K562 (cell line): ENCODE measurements at regions of chr15 and their contacts with region 1.

Region 1: DNA sequence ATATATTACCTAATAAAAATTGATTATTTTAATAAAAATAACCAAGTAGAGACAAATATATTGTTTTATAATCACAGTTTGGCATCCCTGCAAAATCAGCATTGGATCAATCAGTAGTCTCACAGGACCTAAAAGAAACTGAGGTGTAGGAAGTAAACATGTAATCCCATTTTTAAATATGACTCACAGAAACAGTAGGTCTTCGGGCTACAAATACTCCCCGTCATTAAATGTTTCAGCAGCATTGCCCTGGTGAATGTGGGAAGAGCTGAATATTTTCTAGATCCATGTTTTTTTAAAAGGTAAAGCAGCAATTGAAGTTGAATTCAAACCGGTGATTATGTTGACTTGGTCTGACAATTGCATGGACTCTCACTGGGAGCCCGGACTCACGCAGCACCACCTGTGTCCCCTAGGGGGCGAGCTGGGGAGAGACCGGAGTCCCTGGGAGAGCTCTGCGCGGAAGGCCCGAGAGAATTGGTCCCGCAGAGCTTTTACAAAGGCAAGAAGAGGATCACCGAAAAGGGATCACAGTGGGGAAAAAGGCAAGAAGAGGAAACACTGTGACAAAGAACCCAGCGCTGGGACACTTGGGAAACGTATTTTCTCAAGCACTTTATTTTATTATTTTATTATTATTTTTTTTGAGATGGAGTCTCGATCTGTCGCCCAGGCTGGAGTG is 17.2 kb upstream of the USP3 start:
- DNase-seq: peak; percentile 87 to 90 (median 89)
- ATAC-seq: peak; percentile 97
- H3K4me3 ChIP-seq: no peak overlapping the region
- H3K27ac ChIP-seq: peak overlapping the region; percentile 37; the same call in 2 of the 3 replicates
- H3K4me1 ChIP-seq: peaks cover 4 to 16% of the 10 kb centered on the region in 2 experiments; a peak in 4 of 5 replicates
- H3K27me3 ChIP-seq: no peaks in the 10 kb centered on the region
- CTCF ChIP-seq: peak; percentile 84 to 97 (median 91)
- EP300 ChIP-seq: no peak
- POLR2A ChIP-seq: no peak
- RAD21 ChIP-seq: peak; percentile 65 to 70

Region 2: DNA sequence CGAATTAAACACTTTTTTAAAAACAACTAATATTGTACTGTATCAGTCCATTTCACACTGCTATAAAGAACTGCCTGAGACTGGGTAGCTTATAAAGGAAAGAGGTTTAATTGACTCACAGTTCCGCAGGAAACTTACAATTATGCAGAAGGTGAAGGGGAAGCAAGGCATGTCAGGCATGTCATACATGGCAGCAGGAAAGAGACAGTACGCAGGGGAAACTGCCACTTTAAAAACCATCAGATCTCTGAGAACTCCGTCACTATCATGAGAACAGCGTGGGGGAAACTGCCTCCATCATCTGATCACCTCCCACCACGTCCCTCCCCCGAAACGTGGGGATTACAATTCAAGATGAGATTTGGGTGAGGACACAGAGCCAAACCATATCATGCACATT is 607.4 kb before region 1 on chr15:
- CTCF ChIA-PET with region 1: no interaction called
- POLR2A ChIA-PET with region 1: no interaction called
- in situ Hi-C with region 1: no loop called
- intact Hi-C with region 1: no loop called
- DNase-seq: no peak
- ATAC-seq: no peak
- H3K4me3 ChIP-seq: no peak overlapping the region
- H3K27ac ChIP-seq: no peak overlapping the region
- H3K4me1 ChIP-seq: no peaks in the 10 kb centered on the region
- H3K27me3 ChIP-seq: peaks cover 12 to 26% of the 10 kb centered on the region in 2 experiments; a peak in 4 of 5 replicates
- CTCF ChIP-seq: no peak
- EP300 ChIP-seq: no peak
- POLR2A ChIP-seq: no peak
- RAD21 ChIP-seq: no peak

Region 3: GRCh38 chr15:63497642-63498467 is 10.6 kb after region 1 on chr15:
- CTCF ChIA-PET with region 1: no interaction called
- POLR2A ChIA-PET with region 1: interaction called, 12 read pairs
- in situ Hi-C with region 1: no loop called
- intact Hi-C with region 1: loop called (anchors 1 kb)
- DNase-seq: no peak
- ATAC-seq: peak; percentile 58
- H3K4me3 ChIP-seq: no peak overlapping the region
- H3K27ac ChIP-seq: no peak overlapping the region
- H3K4me1 ChIP-seq: peaks cover 4 to 13% of the 10 kb centered on the region in 2 experiments
- H3K27me3 ChIP-seq: no peaks in the 10 kb centered on the region
- CTCF ChIP-seq: no peak
- EP300 ChIP-seq: peak; percentile 45
- POLR2A ChIP-seq: no peak
- RAD21 ChIP-seq: no peak

Region 4: DNA sequence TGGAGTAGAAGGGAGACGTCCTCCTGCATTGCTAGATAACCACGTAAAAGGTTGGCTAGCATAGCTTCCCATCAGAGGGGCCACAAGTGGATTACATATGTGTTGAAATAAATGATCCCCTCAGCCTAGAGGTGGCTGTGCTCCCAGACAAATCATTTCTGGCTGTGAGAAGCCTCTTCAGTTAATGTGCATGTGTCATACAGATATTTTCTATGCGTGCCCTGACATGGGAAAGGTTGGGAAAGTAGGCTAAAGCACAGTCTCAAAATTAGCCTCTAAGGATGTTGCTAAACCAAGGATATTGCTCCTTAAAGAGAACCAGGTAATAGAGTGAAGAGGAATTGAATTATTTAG is 35.0 kb after region 1 on chr15:
- CTCF ChIA-PET with region 1: no interaction called
- POLR2A ChIA-PET with region 1: interaction called, 3 read pairs
- in situ Hi-C with region 1: no loop called
- intact Hi-C with region 1: loop called (anchors 2 kb)
- DNase-seq: no peak
- ATAC-seq: peak; percentile 30
- H3K4me3 ChIP-seq: no peak overlapping the region
- H3K27ac ChIP-seq: peak overlapping the region; percentile 46; the same call in 2 of the 3 replicates
- H3K4me1 ChIP-seq: peaks cover 16 to 50% of the 10 kb centered on the region in 2 experiments; a peak in 4 of 5 replicates
- H3K27me3 ChIP-seq: no peaks in the 10 kb centered on the region
- CTCF ChIP-seq: no peak; a peak in 1 of 6 replicates
- EP300 ChIP-seq: no peak
- POLR2A ChIP-seq: no peak
- RAD21 ChIP-seq: no peak

Region 5: GRCh38 chr15:63599401-63600000 is 112.3 kb after region 1 on chr15:
- CTCF ChIA-PET with region 1: no interaction called
- POLR2A ChIA-PET with region 1: no interaction called
- in situ Hi-C with region 1: no loop called
- intact Hi-C with region 1: loop called (anchors 5 kb)
- DNase-seq: peak in 1 of 4 experiments; percentile 16
- ATAC-seq: peak; percentile 37; the same call in 2 of the 3 replicates
- H3K4me3 ChIP-seq: no peak overlapping the region
- H3K27ac ChIP-seq: no peak overlapping the region
- H3K4me1 ChIP-seq: peaks cover 0 to 18% of the 10 kb centered on the region in 2 experiments; a peak in 2 of 5 replicates
- H3K27me3 ChIP-seq: no peaks in the 10 kb centered on the region
- CTCF ChIP-seq: peak; percentile 41 to 56 (median 50)
- EP300 ChIP-seq: no peak
- POLR2A ChIP-seq: no peak
- RAD21 ChIP-seq: peak in 1 of 2 experiments; percentile 73; a peak in 2 of 4 replicates